BJ (cell line): ENCODE measurements at regions of chr16 and their contacts with region 1.

Region 1: DNA sequence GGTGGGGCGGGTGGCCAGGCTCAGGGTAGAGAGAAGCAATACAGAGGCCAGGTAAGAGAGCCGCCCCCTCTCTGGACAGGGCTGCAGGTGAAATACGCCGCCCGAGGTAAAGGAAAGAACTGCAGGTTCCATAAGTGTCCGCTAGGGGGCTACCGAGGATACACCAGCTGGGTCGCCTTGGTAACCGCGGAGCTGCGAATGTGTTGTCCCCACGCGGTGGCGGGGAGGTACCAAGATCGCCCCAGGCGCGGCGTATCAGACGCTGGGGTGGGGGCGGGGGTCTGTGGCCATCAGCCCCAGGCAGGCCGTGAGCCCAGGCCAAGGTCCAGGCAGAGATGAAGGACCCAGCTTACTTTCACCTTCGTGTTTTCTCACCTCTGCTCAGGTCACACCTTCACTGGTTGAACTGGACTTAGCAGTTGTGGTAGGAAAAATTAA is 18.4 kb upstream of the ZFP90 start:
- DNase-seq: no peak
- H3K4me3 ChIP-seq: peak overlapping the region; percentile 31
- H3K27me3 ChIP-seq: no peaks in the 10 kb centered on the region
- CTCF ChIP-seq: peak; percentile 99

Region 2: GRCh38 chr16:68369697-68370580 is 150.7 kb before region 1 on chr16:
- CTCF ChIA-PET with region 1: interaction called, 13 read pairs
- POLR2A ChIA-PET with region 1: no interaction called
- DNase-seq: no peak
- H3K4me3 ChIP-seq: no peak overlapping the region
- H3K27me3 ChIP-seq: peaks cover 2% of the 10 kb centered on the region
- CTCF ChIP-seq: no peak

Region 3: DNA sequence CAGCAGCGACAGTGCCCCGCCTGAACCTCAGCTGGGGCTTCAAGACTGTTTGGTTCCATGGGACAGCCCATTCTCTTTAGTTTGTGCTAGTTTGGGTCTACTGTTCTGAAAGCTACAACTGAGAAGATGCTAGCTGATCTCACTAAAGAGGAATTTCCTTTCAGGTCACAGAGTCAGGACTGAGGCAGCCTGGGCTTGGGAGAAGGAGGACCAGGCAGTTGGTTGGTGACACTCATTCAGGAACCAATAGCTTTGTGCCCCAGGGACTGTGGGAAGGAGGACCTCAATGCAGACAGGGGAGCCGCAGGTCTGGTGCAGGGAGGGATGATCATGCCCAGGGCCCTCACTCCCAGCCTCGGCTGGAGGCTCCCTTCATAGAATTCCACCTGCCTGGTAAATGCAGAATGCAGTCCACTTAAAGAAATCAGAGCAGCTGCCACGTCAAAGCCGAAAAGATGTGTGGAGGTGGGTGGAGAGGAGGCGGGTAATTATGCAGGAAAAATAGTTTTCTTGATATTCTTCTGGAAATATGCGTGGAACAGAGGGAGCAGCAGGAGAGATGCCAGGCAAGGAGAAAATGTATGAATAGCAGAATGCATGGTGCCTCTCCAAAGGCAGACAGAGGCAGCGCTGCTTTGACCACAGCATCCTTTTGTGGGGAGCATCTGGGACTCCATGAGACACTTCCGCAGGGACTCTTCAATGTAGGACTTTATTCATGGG is 14.2 kb before region 1 on chr16:
- CTCF ChIA-PET with region 1: interaction called, 53 read pairs
- POLR2A ChIA-PET with region 1: no interaction called
- DNase-seq: no peak
- H3K4me3 ChIP-seq: no peak overlapping the region
- H3K27me3 ChIP-seq: no peaks in the 10 kb centered on the region
- CTCF ChIP-seq: no peak

Region 4: DNA sequence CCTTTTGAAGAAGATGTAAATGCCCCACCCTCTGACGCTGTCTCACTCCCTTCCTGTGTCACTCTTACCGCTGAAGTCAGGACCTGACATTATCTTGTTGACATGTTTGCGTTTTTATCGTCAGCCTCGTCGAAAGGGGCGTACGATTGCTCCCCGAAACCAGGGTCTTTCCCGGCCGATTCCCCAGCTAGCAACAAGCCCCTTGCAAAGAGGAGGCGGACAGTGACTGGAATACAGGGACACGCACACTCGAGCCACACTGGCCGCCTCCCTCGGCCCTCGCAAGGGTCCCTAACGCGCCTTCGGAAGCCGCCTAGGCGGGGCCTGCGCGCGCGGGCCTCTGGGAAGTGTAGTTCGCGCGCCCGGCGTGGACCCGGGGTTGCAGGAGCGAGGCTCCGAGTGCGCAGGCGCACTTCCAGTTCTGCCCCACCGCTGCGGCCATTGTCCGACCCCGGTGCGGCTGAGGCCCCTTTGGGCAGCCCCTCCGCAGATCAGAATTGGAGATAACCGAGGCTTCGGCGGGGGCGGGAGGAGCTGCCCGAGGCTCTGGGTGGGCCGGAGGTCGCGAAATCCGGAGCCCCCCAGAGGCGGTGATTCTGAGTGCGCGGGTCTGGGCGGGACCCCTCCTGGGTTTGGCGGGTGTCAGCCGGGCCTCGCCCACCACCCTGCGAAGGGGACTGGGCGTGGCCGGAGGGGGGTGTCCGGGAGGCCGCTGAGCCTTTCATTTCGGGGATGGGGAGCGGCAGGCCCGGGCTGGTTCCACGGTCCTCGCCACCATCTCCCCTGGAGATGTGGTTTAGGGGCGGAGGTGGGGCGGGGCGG is 18.4 kb after region 1 on chr16 and contains the start of gene ZFP90:
- CTCF ChIA-PET with region 1: interaction called, 16 read pairs
- POLR2A ChIA-PET with region 1: no interaction called
- DNase-seq: peak; percentile 22
- H3K4me3 ChIP-seq: peak within 1 kb of the TSS; percentile 88
- H3K27me3 ChIP-seq: no peaks in the 10 kb centered on the region
- CTCF ChIP-seq: no peak
- polyA plus RNA-seq, gene ZFP90: 13.0 and 20.1 TPM in 2 replicates

Region 5: GRCh38 chr16:68553186-68553585 is 32.5 kb after region 1 on chr16:
- CTCF ChIA-PET with region 1: no interaction called
- POLR2A ChIA-PET with region 1: no interaction called
- DNase-seq: no peak
- H3K4me3 ChIP-seq: no peak overlapping the region
- H3K27me3 ChIP-seq: no peaks in the 10 kb centered on the region
- CTCF ChIP-seq: no peak

Region 6: GRCh38 chr16:68737046-68737729 is 216.5 kb after region 1 on chr16 and contains the start of gene CDH1:
- CTCF ChIA-PET with region 1: no interaction called
- POLR2A ChIA-PET with region 1: no interaction called
- DNase-seq: no peak
- H3K4me3 ChIP-seq: no peak within 1 kb of the TSS
- H3K27me3 ChIP-seq: peaks cover 22% of the 10 kb centered on the region
- CTCF ChIP-seq: no peak
- polyA plus RNA-seq, gene CDH1: 0.16 and 0.26 TPM in 2 replicates